ENCODE measurements at regions of chrX and their contacts with region 1.

Region 1: GRCh38 chrX:153681175-153681574 is 6.6 kb upstream of the SLC6A8 start:
- DNase-seq: no peak
- ATAC-seq: no peak
- H3K4me3 ChIP-seq: no peak overlapping the region
- H3K27ac ChIP-seq: no peak overlapping the region
- H3K4me1 ChIP-seq: no peaks in the 10 kb centered on the region
- H3K27me3 ChIP-seq: peaks cover 0 to 66% (median 0%) of the 10 kb centered on the region in 7 donors
- CTCF ChIP-seq: no peak

Region 2: GRCh38 chrX:153620576-153620975 is 60.6 kb before region 1 on chrX:
- intact Hi-C with region 1: no loop called
- DNase-seq: no peak
- ATAC-seq: no peak
- H3K4me3 ChIP-seq: no peak overlapping the region
- H3K27ac ChIP-seq: no peak overlapping the region
- H3K4me1 ChIP-seq: no peaks in the 10 kb centered on the region
- H3K27me3 ChIP-seq: peaks cover 0 to 52% (median 0%) of the 10 kb centered on the region in 7 donors
- CTCF ChIP-seq: no peak

Region 3: DNA sequence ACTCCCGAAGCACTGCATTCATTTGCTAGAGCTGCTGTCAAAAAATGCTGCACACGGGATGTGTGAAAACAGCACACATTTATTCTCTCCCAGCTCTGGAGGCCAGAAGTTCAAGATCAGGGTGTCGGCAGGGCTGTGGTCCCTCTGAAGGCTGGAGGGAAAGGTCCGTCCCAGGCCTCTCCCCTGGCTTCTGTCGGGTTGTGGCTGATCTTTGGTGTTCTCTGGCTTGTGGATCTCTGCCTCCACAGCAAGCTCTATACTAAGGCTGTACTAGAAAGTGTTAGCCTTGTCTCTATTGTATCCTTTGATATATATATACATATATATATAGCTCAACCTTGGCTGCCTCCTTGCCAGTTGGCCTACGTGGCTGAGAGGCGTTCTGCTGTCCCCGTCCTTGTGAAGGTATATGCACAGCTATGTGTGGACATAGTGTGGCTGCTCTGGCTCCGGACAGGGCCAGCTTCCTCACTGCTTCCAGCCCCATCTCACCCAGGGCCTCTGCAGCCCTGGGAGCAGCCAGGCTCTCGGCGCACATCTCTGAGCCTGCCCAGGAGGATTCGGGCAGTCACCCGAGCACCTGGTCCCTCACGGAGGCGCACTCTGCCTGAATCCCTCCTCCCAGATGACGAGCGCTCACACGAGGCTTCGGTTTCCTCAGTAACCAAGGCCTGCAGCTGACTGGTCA is 49.1 kb before region 1 on chrX:
- intact Hi-C with region 1: loop called in 1 of 10 experiments (anchors 1 kb)
- DNase-seq: no peak
- ATAC-seq: no peak
- H3K4me3 ChIP-seq: no peak overlapping the region
- H3K27ac ChIP-seq: no peak overlapping the region
- H3K4me1 ChIP-seq: peaks cover 0 to 10% (median 0%) of the 10 kb centered on the region in 9 donors
- H3K27me3 ChIP-seq: peaks cover 0 to 21% (median 0%) of the 10 kb centered on the region in 7 donors
- CTCF ChIP-seq: no peak

Region 4: GRCh38 chrX:154082396-154083125 is 401.4 kb after region 1 on chrX:
- intact Hi-C with region 1: no loop called
- DNase-seq: no peak
- ATAC-seq: peak in 4 of 8 donors; percentile 23 to 37 (median 30)
- H3K4me3 ChIP-seq: no peak overlapping the region
- H3K27ac ChIP-seq: peak overlapping the region in 5 of 10 donors; percentile 32 to 70 (median 40)
- H3K4me1 ChIP-seq: peaks cover 0 to 50% (median 25%) of the 10 kb centered on the region in 9 donors
- H3K27me3 ChIP-seq: peaks cover 0 to 18% (median 0%) of the 10 kb centered on the region in 7 donors
- CTCF ChIP-seq: no peak